CD14-positive monocyte (primary cell): ENCODE measurements at regions of chr2 and their contacts with region 1.

Region 1: DNA sequence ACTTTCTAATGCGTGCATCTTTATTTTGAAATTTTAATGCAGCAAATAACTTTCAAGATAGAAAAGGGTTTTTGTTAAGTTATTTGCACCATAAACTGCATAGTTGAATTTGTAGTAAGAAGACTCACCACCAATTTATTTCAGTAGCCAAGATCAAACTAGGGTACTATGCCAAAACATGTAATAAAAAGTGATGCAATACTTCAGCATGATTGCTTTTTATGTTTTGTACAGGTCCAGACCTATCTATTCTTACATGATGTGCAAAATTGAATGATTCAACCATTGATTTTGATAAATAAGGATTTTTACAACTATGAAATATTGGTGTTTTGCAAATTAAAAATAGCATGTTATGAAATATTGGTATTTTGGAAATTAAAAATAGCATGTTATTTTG is 26.7 kb downstream of the AGPS start:
- DNase-seq: no peak
- H3K4me3 ChIP-seq: no peak overlapping the region
- H3K4me3 Mint-ChIP-seq: no peak overlapping the region
- H3K27ac ChIP-seq: peak overlapping the region in 1 of 2 donors; percentile 6
- H3K27ac Mint-ChIP-seq: no peak overlapping the region
- H3K4me1 ChIP-seq: no peaks in the 10 kb centered on the region
- H3K4me1 Mint-ChIP-seq: peaks cover 5% of the 10 kb centered on the region
- H3K27me3 ChIP-seq: no peaks in the 10 kb centered on the region
- H3K27me3 Mint-ChIP-seq: no peaks in the 10 kb centered on the region
- CTCF ChIP-seq: no peak

Region 2: DNA sequence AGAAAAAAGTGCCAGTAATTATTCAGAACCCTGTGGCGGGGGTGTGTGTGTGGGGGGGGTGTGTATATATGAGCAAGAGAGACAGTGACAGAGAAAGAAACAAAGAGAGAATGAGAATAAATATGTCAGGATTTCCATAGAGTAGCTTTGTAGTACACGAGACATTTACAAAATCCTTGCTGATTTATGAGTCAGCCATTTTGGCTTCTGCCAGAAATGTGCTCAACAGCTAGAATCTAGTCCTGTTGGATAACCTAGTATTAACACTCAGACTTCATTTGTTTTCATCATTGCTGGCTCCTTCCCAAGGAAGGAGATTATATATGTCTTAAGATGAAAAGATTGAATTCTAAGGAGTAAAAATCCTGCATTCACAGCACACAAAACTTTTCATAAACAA is 347.2 kb before region 1 on chr2:
- intact Hi-C with region 1: no loop called
- DNase-seq: no peak
- H3K4me3 ChIP-seq: no peak overlapping the region
- H3K4me3 Mint-ChIP-seq: no peak overlapping the region
- H3K27ac ChIP-seq: no peak overlapping the region
- H3K27ac Mint-ChIP-seq: no peak overlapping the region
- H3K4me1 ChIP-seq: no peaks in the 10 kb centered on the region
- H3K4me1 Mint-ChIP-seq: peaks cover 2% of the 10 kb centered on the region
- H3K27me3 ChIP-seq: no peaks in the 10 kb centered on the region
- H3K27me3 Mint-ChIP-seq: peaks cover 0 to 5% (median 0%) of the 10 kb centered on the region in 3 donors
- CTCF ChIP-seq: no peak

Region 3: GRCh38 chr2:177332041-177332991 is 87.0 kb before region 1 on chr2:
- intact Hi-C with region 1: loop called (anchors 5 kb)
- DNase-seq: peak; percentile 67 to 78 (median 75)
- H3K4me3 ChIP-seq: peak overlapping the region; percentile 9 to 64 (median 41)
- H3K4me3 Mint-ChIP-seq: peak overlapping the region; percentile 67 to 72
- H3K27ac ChIP-seq: peak overlapping the region in 1 of 2 donors; percentile 67
- H3K27ac Mint-ChIP-seq: peak overlapping the region in 6 of 7 donors; percentile 13 to 75 (median 42)
- H3K4me1 ChIP-seq: peaks cover 4 to 5% of the 10 kb centered on the region in 2 donors
- H3K4me1 Mint-ChIP-seq: peaks cover 13% of the 10 kb centered on the region
- H3K27me3 ChIP-seq: no peaks in the 10 kb centered on the region
- H3K27me3 Mint-ChIP-seq: no peaks in the 10 kb centered on the region
- CTCF ChIP-seq: peak; percentile 68

Region 4: DNA sequence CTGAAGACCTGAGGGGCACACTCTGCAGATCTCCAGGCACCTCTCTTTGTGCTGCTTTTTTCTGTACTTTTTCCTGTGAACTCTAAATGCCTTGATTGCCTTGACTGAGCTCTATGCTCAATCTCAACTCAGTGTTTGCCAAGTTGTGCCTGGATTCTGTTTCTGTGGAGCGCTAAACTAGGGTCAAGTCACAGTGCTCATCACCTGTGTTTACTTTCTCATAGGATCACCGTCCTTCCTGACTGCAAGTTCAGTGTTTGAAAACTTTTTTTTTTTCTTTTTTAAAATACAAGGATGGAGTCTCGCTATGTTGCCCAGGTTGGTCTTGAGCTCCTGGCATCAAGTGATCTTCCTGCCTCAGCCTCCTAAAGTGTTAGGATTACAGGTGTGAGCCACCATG is 35.9 kb after region 1 on chr2:
- intact Hi-C with region 1: no loop called
- DNase-seq: no peak
- H3K4me3 ChIP-seq: no peak overlapping the region
- H3K4me3 Mint-ChIP-seq: no peak overlapping the region
- H3K27ac ChIP-seq: no peak overlapping the region
- H3K27ac Mint-ChIP-seq: no peak overlapping the region
- H3K4me1 ChIP-seq: no peaks in the 10 kb centered on the region
- H3K4me1 Mint-ChIP-seq: no peaks in the 10 kb centered on the region
- H3K27me3 ChIP-seq: no peaks in the 10 kb centered on the region
- H3K27me3 Mint-ChIP-seq: no peaks in the 10 kb centered on the region
- CTCF ChIP-seq: no peak

Region 5: DNA sequence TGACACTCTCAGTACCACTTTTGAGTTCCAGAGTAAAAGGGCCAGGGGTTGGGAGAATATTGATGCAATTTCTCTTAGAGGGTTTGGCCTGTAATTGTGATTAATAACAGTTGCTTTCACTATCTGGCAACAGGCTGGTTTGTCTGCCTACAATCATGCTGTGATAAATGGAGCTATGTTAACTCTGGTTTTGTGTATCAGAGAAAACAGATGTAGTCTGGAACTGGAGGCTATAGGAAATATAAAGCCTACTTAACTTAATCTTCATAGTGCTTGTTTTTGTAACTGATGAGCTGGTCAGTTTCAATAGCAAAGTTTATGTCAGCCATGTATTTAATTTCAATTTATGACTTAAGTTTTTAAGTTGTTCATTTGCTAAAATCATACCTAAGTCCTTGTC is 111.3 kb after region 1 on chr2:
- intact Hi-C with region 1: no loop called
- DNase-seq: no peak
- H3K4me3 ChIP-seq: no peak overlapping the region
- H3K4me3 Mint-ChIP-seq: no peak overlapping the region
- H3K27ac ChIP-seq: no peak overlapping the region
- H3K27ac Mint-ChIP-seq: no peak overlapping the region
- H3K4me1 ChIP-seq: no peaks in the 10 kb centered on the region
- H3K4me1 Mint-ChIP-seq: no peaks in the 10 kb centered on the region
- H3K27me3 ChIP-seq: no peaks in the 10 kb centered on the region
- H3K27me3 Mint-ChIP-seq: no peaks in the 10 kb centered on the region
- CTCF ChIP-seq: no peak